Activated B cell treated with CpG ODN at 0.5 μM for 24 hours (primary cell): ENCODE measurements at regions of chr4 and their contacts with region 1.

Region 1: GRCh38 chr4:102826890-102827673 is at the start of gene UBE2D3:
- DNase-seq: peak; percentile 94
- ATAC-seq: peak; percentile 49
- H3K4me3 Mint-ChIP-seq: no peak within 1 kb of the TSS
- H3K27ac Mint-ChIP-seq: no peak within 1 kb of the TSS
- H3K4me1 Mint-ChIP-seq: peaks cover 33% of the 10 kb centered on the region
- H3K27me3 Mint-ChIP-seq: no peaks in the 10 kb centered on the region
- CTCF ChIP-seq: no peak
- total RNA-seq, gene UBE2D3: 321 and 327 TPM in 2 replicates

Region 2: GRCh38 chr4:102430461-102430910 is 396.6 kb before region 1 on chr4:
- CTCF ChIA-PET with region 1: no interaction called
- POLR2A ChIA-PET with region 1: interaction called, 8 read pairs
- intact Hi-C with region 1: loop called (anchors 2 kb)
- DNase-seq: no peak
- ATAC-seq: no peak
- H3K4me3 Mint-ChIP-seq: peak overlapping the region; percentile 92
- H3K27ac Mint-ChIP-seq: peak overlapping the region; percentile 76
- H3K4me1 Mint-ChIP-seq: peaks cover 5% of the 10 kb centered on the region
- H3K27me3 Mint-ChIP-seq: no peaks in the 10 kb centered on the region
- CTCF ChIP-seq: no peak

Region 3: DNA sequence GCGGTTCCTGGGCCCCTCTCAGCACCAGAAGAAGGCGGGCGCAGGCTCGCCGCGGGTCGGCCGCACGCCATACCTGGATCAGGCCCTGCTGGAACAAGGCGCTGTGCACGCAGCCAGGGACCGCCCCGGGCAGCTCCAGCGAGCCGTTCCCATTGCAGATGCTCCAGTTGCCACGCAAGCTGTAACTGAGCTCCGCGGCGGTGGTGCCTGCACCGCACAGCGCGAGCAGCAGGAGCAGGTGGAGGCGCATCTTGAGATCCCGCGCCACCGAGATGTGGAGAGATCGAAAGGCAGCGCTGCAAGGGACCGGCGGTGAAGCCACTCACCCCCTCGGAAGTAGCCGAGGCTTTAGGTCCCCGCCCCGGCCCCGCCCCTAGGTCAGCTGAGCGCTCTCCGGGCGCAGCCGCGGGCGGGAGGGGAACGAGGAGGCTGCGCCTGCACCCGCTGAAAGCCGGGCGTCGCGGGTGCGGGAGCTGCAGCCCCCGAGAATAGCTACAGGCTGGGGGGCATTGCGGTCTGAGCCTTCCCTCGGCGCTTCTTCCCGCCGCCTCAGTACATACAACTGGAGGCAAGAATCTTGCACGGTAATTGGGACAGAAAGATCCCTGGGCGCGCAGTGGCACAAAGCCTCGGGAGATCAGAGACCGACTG is 66.3 kb before region 1 on chr4 and contains the start of gene MANBA:
- CTCF ChIA-PET with region 1: interaction called, 4 read pairs
- POLR2A ChIA-PET with region 1: interaction called, 110 read pairs
- intact Hi-C with region 1: loop called (anchors 1 kb)
- DNase-seq: peak; percentile 77
- ATAC-seq: peak; percentile 79
- H3K4me3 Mint-ChIP-seq: peak within 1 kb of the TSS; percentile 93
- H3K27ac Mint-ChIP-seq: peak within 1 kb of the TSS; percentile 96
- H3K4me1 Mint-ChIP-seq: peaks cover 51% of the 10 kb centered on the region
- H3K27me3 Mint-ChIP-seq: no peaks in the 10 kb centered on the region
- CTCF ChIP-seq: no peak
- total RNA-seq, gene MANBA: 41.2 and 55.3 TPM in 2 replicates

Region 4: GRCh38 chr4:102843273-102843672 is 16.2 kb after region 1 on chr4:
- CTCF ChIA-PET with region 1: interaction called, 3 read pairs
- POLR2A ChIA-PET with region 1: interaction called, 12 read pairs
- intact Hi-C with region 1: no loop called
- DNase-seq: no peak
- ATAC-seq: no peak
- H3K4me3 Mint-ChIP-seq: no peak overlapping the region
- H3K27ac Mint-ChIP-seq: no peak overlapping the region
- H3K4me1 Mint-ChIP-seq: peaks cover 2% of the 10 kb centered on the region
- H3K27me3 Mint-ChIP-seq: no peaks in the 10 kb centered on the region
- CTCF ChIP-seq: no peak

Region 5: GRCh38 chr4:102918859-102919258 is 91.8 kb after region 1 on chr4:
- CTCF ChIA-PET with region 1: no interaction called
- POLR2A ChIA-PET with region 1: no interaction called
- intact Hi-C with region 1: no loop called
- DNase-seq: no peak
- ATAC-seq: no peak
- H3K4me3 Mint-ChIP-seq: no peak overlapping the region
- H3K27ac Mint-ChIP-seq: no peak overlapping the region
- H3K4me1 Mint-ChIP-seq: no peaks in the 10 kb centered on the region
- H3K27me3 Mint-ChIP-seq: no peaks in the 10 kb centered on the region
- CTCF ChIP-seq: no peak

Region 6: DNA sequence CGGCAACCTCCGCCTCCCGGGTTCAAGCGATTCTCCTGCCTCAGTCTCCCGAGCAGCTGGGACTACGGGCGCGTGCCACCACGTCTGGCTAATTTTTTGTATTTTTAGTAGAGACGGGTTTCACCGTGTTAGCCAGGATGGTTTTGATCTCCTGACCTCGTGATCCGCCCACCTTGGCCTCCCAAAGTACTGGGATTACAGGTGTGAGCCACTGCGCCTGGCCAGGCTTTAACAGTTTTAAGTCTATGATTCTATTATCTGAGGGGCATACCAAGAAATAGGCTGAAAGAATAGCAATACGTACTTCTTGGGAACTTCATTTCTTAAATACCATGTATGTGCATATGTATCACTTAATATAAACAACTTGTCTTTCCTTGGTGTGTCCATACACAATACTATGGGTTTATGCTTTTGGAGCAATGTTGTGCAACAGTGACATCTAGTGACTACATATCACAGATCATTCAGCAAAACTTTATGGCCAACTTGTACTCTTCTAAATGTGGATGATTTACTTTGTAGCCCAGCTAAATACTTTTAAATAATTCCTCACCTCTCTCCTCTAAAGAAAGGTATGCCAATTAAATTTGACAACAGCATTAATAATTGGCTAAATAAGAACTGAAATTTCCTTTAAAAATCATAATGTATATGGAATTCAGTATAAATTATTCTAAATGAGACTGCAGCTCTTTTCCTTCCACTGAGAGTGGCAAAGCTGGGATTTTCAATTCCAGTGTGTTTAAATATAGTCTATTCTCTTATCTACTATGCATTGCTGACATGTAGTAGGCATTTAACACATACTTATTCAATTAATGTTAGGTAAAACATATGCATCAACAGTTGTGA is 182.0 kb after region 1 on chr4:
- CTCF ChIA-PET with region 1: interaction called, 3 read pairs
- POLR2A ChIA-PET with region 1: no interaction called
- intact Hi-C with region 1: loop called (anchors 2 kb)
- DNase-seq: no peak
- ATAC-seq: peak; percentile 92
- H3K4me3 Mint-ChIP-seq: no peak overlapping the region
- H3K27ac Mint-ChIP-seq: no peak overlapping the region
- H3K4me1 Mint-ChIP-seq: no peaks in the 10 kb centered on the region
- H3K27me3 Mint-ChIP-seq: no peaks in the 10 kb centered on the region
- CTCF ChIP-seq: peak; percentile 68

Region 7: DNA sequence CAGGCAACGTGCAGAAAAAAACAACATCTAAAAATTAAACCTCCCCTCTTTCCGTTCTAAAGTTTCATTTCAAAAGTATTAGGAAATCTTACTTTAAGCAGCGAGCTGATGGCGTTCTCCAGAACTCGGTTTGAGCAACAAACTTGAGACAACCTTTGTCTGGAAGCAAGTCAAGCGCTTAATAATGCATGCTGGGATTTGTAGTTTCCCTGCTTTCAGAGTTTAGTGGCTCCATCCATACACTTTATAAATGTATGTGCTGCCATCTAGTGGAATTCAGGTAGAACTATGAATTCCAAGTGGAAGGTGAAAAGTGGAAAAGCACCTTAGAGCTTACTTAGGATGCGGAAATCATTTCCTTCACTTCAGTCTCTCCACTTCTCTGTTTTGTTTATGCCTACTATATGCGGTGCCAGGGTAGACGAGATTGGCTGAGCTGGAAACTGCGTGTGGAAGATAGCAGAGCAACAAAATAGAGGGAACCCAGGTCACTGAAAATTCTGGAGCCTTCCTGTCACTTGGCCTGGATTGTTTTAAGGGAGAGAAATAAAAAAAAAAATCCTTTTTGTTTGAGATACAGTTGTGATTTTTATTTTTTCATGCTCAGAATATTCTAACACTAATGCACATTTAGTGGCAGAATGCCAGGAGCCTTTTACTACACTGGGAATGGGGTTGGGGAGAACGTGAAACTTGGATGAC is 272.8 kb after region 1 on chr4 and contains the start of gene BDH2:
- CTCF ChIA-PET with region 1: no interaction called
- POLR2A ChIA-PET with region 1: interaction called, 9 read pairs
- intact Hi-C with region 1: loop called (anchors 1 kb)
- DNase-seq: no peak
- ATAC-seq: peak; percentile 99
- H3K4me3 Mint-ChIP-seq: peak within 1 kb of the TSS; percentile 79
- H3K27ac Mint-ChIP-seq: peak within 1 kb of the TSS; percentile 63
- H3K4me1 Mint-ChIP-seq: peaks cover 14% of the 10 kb centered on the region
- H3K27me3 Mint-ChIP-seq: no peaks in the 10 kb centered on the region
- CTCF ChIP-seq: peak; percentile 37
- total RNA-seq, gene BDH2: 5.1 and 6.5 TPM in 2 replicates